Left ventricle myocardium inferior (tissue), 1 donor: ENCODE measurements at regions of chr18 and their contacts with region 1.

Region 1: DNA sequence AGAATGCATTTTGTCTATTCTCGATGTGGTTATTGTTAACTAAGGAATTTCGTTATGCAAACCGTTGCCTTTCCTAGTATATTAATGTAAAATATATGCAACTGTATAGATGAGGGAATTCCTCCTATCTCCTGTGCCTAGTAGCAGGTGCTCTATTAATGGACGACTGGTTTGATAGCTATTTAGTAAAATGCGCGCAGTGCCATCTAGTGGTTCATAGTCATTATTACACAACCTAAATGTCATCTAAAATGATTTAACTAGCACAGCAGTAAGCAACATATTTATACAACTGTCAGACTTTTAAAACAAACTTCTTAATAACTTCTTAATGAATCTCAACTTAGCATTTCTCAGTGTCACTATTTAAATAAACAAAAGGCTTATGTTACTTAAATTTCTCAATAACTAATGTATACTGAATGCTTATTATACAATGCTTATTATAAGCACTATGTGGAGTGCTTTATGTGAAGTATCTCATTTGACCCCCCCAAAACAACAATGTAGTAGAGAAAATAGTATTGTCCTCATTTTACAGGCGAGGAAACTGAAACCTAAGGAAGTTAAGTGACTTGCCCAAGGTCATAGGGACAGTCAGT is 77.9 kb downstream of the DTNA start:
- DNase-seq: no peak
- H3K4me3 ChIP-seq: no peak overlapping the region
- H3K27ac ChIP-seq: no peak overlapping the region
- H3K4me1 ChIP-seq: no peaks in the 10 kb centered on the region
- H3K27me3 ChIP-seq: no peaks in the 10 kb centered on the region
- CTCF ChIP-seq: peak; percentile 82

Region 2: GRCh38 chr18:34661464-34662111 is 126.4 kb before region 1 on chr18:
- intact Hi-C with region 1: loop called (anchors 5 kb)
- DNase-seq: no peak
- H3K4me3 ChIP-seq: no peak overlapping the region
- H3K27ac ChIP-seq: peak overlapping the region; percentile 85
- H3K4me1 ChIP-seq: peaks cover 65% of the 10 kb centered on the region
- H3K27me3 ChIP-seq: no peaks in the 10 kb centered on the region
- CTCF ChIP-seq: peak; percentile 81

Region 3: DNA sequence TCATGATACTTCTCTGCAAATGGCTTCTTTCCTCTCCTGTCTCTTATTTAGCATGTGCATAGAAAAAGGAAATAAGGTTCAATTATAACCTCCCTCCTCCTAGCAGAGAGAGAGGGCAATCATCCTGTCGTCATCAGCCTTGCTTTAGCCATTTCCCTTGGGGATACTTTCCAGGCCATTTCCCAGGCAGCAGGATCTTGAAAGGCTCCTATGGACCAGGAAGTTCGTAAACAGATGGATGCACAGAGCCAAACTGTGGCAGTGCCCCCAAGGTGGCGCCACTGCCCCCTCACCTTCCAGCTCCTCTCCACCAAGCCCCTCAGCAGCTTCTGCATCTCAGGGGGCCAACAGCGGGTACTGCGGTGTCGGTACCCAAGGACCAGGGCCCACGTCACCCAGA is 79.5 kb after region 1 on chr18:
- intact Hi-C with region 1: no loop called
- DNase-seq: no peak
- H3K4me3 ChIP-seq: no peak overlapping the region
- H3K27ac ChIP-seq: peak overlapping the region; percentile 57
- H3K4me1 ChIP-seq: peaks cover 19% of the 10 kb centered on the region
- H3K27me3 ChIP-seq: no peaks in the 10 kb centered on the region
- CTCF ChIP-seq: peak; percentile 39